ENCODE measurements at regions of chr11 and their contacts with region 1.

Region 1: DNA sequence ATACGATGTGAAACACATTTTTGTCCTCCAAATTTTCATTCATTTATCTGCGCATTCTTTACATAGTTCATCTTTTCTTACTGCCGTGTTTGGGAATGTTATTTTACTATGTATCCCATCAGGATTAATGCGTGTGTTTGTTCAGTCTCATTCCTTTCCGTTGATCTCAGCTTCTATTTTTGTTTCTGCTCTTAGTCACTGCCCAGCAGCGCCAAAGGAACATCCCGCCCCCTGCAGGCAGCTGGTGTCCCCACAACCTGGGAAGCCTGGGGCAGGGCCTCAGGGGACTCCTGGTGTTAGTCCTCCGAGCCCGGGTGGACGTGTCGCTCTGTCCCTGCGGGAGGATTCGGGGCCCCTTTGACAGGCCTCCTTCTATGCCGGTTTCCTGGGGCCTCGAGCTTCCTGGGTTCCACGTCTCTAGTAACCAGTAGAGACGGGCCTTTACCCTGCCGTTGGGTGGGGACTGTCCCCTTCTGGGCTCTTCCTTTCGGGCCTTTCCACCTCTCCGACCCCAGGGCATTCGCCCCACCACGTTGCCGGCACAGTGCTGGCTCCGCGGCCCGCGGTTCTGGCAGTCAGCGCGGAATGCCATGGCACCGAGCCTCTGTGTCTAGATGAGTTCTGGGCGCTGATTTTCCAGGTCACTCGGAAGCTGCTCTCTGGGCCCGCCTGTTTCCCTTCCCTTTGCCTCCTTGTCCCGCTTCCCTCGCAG is 39.8 kb downstream of the WEE1 start:
- DNase-seq: peak; percentile 90 to 94
- ATAC-seq: peak; percentile 84

Region 2: DNA sequence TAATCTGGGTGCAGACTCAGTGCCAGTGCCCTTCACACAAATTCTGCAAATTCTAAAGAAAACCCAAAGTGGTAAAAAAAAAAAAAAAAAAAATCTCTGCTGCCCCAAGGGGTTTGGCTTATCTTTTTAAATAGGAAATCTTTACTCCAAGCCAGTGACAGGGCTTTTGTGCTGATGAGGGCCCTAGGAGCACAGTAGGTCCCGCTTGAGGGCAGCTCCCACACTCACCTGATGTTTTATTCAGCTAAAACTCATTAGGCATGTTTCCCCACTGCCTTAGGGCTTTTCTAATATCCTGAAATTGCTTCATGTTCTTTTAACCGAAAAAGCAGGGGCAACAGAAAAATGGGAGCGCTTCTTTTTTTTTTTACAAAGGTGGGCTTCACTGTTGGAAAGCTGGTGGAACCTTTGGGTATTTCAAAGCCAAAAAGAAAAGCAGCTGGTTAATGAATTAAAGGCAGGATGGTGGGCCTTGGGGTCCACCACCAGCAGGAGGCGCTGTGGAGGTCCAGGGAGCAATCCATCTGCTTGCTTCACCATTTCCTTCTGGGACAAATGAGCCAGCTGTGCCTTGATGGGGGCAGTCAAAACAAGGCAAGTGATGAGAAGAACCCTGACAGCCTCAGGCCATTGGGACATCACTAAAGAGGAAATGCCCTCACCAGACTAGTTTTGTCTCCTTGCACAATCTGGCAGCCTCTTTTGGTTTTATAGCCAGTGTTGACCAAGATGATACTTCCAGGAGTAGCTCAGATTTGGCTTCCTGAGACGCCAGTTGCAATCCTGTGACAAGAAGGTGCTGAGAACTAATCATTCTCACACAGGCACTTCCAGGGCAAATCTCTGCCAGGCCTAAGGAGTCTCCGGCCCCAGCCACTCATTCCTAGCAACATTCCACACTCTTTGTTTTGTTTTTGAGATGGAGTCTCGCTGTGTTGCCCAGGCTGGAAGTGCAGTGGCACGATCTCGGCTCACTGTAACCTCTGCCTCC is 78.2 kb before region 1 on chr11:
- intact Hi-C with region 1: loop called in 1 of 2 experiments (anchors 10 kb)
- DNase-seq: peak; percentile 49 to 88
- ATAC-seq: peak; percentile 46

Region 3: DNA sequence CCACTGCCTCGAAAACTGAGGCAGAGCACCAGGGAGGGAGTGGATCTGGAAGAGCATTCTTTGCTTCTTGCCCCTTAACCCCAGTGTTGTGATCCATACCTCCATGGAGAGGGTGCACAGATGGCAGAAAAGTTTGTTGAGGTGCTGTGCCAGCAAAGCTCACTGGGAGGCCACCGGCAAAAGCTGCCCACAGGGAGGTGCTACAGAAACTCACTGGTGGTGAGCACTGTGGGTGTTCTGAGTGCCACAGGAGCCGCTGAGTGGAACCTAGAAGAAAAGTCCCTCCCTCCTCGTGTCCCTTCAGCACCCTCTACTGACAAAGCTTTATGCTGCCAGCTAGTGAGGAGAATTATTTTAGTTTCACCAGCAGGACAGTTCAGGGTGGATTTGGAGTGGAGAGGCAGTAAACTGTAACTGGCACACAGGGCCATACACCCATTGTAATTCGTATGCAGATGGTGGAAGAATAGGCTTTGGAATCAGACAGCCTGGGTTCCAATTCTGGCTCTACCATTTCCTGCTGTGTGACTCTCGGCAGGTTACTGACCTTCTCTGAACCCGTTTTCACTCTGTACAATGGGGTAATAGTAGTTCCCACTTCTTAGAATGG is 135.2 kb after region 1 on chr11:
- intact Hi-C with region 1: loop called in 1 of 2 experiments (anchors 5 kb)
- DNase-seq: peak; percentile 55 to 59
- ATAC-seq: peak; percentile 96

Measured in left colon (tissue), 2 donors.